ENCODE measurements at regions of chr7 and their contacts with region 1.

Region 1: GRCh38 chr7:142782922-142783900 is 12.4 kb downstream of the PRSS2 start:
- DNase-seq: peak; percentile 89
- ATAC-seq: peak; percentile 91
- H3K4me3 ChIP-seq: peak overlapping the region; percentile 38 to 51
- H3K27ac ChIP-seq: no peak overlapping the region
- H3K4me1 ChIP-seq: peaks cover 0 to 5% of the 10 kb centered on the region in 2 experiments; a peak in 1 of 4 replicates
- H3K27me3 ChIP-seq: no peaks in the 10 kb centered on the region
- CTCF ChIP-seq: peak; percentile 88 to 100 (median 92)
- POLR2A ChIP-seq: no peak
- RAD21 ChIP-seq: peak; percentile 99

Region 2: DNA sequence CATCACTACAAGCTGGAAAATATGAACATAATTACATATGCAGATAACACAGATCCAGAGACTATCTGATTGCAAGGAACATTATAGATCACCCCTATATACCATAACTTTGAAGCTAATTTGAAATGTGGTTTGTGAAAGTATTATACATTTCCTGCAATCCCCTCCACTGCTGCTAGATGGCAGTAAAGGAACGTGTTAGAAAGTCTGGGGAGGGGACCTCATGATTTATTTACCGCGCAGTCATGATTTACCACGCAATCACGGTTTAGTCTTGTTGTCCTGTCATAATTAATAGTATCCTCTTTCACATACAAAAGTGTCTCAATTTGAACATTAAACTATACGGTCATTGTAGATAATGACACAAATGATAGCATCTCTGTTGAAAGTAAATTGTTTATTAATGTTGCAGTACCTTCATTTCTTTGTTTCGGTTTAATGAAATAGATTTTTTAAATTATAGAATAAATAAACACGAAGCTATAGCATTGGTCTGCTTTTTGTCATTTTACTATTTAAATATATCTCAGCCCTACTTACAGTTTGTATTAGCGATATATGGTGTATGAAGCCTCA is 179.3 kb before region 1 on chr7:
- CTCF ChIA-PET with region 1: interaction called, 47 read pairs
- POLR2A ChIA-PET with region 1: interaction called, 3 read pairs
- RAD21 ChIA-PET with region 1: interaction called, 5 to 8 read pairs
- intact Hi-C with region 1: loop called (anchors 1 kb)
- DNase-seq: peak; percentile 53
- ATAC-seq: peak; percentile 81
- H3K4me3 ChIP-seq: no peak overlapping the region; a peak in 2 of 4 replicates
- H3K27ac ChIP-seq: no peak overlapping the region
- H3K4me1 ChIP-seq: peaks cover 0 to 7% of the 10 kb centered on the region in 2 experiments; a peak in 1 of 4 replicates
- H3K27me3 ChIP-seq: no peaks in the 10 kb centered on the region
- CTCF ChIP-seq: peak; percentile 78 to 92 (median 90)
- POLR2A ChIP-seq: no peak
- RAD21 ChIP-seq: peak; percentile 86

Region 3: GRCh38 chr7:142669074-142669654 is 114.0 kb before region 1 on chr7:
- CTCF ChIA-PET with region 1: interaction called, 17 read pairs
- POLR2A ChIA-PET with region 1: no interaction called
- RAD21 ChIA-PET with region 1: interaction called in 1 of 2 experiments, 3 read pairs
- intact Hi-C with region 1: loop called (anchors 1 kb)
- DNase-seq: no peak
- ATAC-seq: peak; percentile 47; the same call in 1 of the 2 replicates
- H3K4me3 ChIP-seq: no peak overlapping the region
- H3K27ac ChIP-seq: no peak overlapping the region
- H3K4me1 ChIP-seq: no peaks in the 10 kb centered on the region
- H3K27me3 ChIP-seq: no peaks in the 10 kb centered on the region
- CTCF ChIP-seq: peak; percentile 35 to 57 (median 41); a peak in 4 of 6 replicates
- POLR2A ChIP-seq: no peak
- RAD21 ChIP-seq: peak; percentile 49

Region 4: DNA sequence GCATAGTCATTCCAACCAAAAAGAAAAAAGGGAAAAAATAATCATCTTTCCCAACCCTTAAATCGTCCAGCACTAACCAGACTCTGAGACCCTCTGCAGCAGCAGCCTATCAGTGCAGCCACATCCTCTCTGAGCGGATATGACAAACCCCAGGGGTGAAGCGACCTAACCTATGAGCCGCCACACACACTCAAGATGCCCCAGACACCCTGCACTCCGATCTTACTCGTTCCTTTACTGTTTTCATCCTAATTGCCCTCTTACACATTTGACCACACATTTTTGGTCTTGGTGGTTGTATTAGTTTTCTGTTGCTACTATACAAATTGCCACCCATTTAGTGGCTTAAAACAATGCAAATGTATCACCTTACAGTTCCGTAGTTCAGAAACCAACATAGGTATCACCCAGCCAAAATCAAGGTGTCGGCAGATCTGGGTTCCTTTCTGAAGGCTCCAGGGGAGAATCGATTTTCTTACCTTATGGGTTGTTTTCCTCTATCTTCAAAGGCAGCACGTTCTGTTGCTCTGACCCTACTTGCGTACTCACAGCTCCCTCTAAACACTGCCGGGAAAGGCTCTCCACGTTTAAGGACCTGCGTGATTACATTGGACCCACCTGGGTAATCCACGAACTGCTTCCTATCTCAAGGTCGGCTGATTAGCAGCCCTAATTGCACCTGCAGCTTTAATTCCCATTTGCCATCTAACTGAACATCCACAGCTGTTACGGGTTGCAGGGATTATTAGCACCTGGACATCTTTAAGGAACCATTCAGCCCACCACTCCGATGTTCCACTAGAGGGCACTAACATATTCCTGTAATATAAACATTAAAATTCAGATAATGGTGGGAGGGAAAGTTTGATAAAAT is 71.2 kb before region 1 on chr7:
- CTCF ChIA-PET with region 1: interaction called, 38 read pairs
- POLR2A ChIA-PET with region 1: no interaction called
- RAD21 ChIA-PET with region 1: interaction called, 4 read pairs
- intact Hi-C with region 1: loop called (anchors 1 kb)
- DNase-seq: peak; percentile 29
- ATAC-seq: peak; percentile 85
- H3K4me3 ChIP-seq: no peak overlapping the region
- H3K27ac ChIP-seq: no peak overlapping the region
- H3K4me1 ChIP-seq: no peaks in the 10 kb centered on the region
- H3K27me3 ChIP-seq: peaks cover 8% of the 10 kb centered on the region; the same call in 1 of the 2 replicates
- CTCF ChIP-seq: peak; percentile 71 to 73 (median 72)
- POLR2A ChIP-seq: no peak
- RAD21 ChIP-seq: peak; percentile 52